Sigmoid colon (tissue), 7 donors: ENCODE measurements at regions of chrX and their contacts with region 1.

Region 1: GRCh38 chrX:38327007-38327774 is at the start of gene RPGR:
- DNase-seq: peak; percentile 97
- H3K4me3 ChIP-seq: peak within 1 kb of the TSS; percentile 48 to 68 (median 64)
- H3K27ac ChIP-seq: peak within 1 kb of the TSS; percentile 83 to 92 (median 86)
- H3K4me1 ChIP-seq: peaks cover 0 to 10% (median 0%) of the 10 kb centered on the region in 4 donors
- H3K27me3 ChIP-seq: peaks cover 0 to 3% (median 0%) of the 10 kb centered on the region in 3 donors
- CTCF ChIP-seq: peak; percentile 64 to 72 (median 67)
- EP300 ChIP-seq: no peak
- POLR2A ChIP-seq: no peak
- total RNA-seq, gene RPGR: 9.3 to 41.8 (median 17.6) TPM

Region 2: DNA sequence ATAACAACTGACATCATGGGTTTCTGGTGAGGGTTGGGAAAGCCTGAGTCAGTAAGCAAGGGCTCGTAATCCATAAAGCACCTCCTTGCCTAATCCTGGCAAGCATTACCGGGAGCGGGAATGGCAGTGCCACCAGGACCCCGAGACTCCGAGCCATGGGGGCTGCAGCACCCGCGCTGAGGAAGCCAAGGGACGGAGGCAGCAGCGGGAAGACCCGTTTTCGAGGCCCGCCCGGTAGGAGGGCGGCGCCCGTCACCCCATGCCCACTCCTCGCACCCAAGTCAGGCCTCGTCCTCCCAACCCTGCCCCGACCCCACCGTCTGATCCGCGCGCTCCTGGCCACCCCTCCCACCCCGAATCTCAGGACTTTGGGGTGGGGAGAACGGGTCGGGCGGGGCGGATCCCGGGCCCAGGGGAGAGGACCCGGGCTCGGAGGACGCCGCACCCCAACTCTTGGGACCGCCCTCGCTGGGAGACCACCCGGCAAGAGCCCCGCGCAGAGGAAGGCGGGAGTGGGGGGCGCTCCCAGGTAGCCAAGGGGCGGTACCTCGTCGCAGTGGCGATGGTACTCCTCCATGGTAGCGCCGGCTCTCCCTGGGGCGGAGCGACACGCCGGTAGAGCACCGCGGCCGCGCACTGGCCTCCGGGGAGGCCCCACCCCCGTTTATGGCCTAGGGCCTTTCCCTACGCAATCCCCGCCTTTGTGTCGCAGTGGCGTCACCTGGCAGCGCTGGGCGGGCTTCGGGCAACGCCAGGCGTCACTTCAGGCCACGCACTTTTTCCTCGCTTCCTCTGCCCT is 480.1 kb before region 1 on chrX and contains the start of gene DYNLT3:
- intact Hi-C with region 1: loop called (anchors 2 kb)
- DNase-seq: peak; percentile 90
- H3K4me3 ChIP-seq: peak within 1 kb of the TSS; percentile 74 to 81 (median 78)
- H3K27ac ChIP-seq: peak within 1 kb of the TSS; percentile 87 to 94 (median 88)
- H3K4me1 ChIP-seq: no peaks in the 10 kb centered on the region
- H3K27me3 ChIP-seq: no peaks in the 10 kb centered on the region
- CTCF ChIP-seq: no peak
- EP300 ChIP-seq: no peak
- POLR2A ChIP-seq: peak; percentile 65 to 70
- total RNA-seq, gene DYNLT3: 32.4 to 55.3 (median 45.2) TPM

Region 3: DNA sequence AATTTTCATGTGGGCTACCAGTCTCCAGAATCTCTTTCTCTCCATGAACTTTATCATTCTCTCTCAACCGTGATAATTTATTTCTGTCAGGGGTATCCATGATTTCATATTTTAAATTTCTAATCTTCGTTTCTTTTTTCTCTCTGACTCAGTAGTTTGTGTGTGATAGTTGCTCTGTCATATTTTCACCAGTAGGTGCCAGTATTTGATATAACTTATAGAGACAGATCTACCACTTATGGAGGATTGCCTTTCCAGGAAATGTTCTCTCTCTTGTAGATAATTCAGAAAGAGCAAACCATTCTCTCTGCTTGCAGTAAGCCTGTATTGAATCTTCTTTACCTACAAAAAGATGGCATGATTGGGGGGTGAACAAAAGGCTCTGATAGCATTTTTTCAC is 400.5 kb before region 1 on chrX:
- intact Hi-C with region 1: loop called (anchors 2 kb)
- DNase-seq: no peak
- H3K4me3 ChIP-seq: no peak overlapping the region
- H3K27ac ChIP-seq: no peak overlapping the region
- H3K4me1 ChIP-seq: no peaks in the 10 kb centered on the region
- H3K27me3 ChIP-seq: no peaks in the 10 kb centered on the region
- CTCF ChIP-seq: peak in 2 of 4 experiments; percentile 33 to 37
- EP300 ChIP-seq: no peak
- POLR2A ChIP-seq: no peak

Region 4: DNA sequence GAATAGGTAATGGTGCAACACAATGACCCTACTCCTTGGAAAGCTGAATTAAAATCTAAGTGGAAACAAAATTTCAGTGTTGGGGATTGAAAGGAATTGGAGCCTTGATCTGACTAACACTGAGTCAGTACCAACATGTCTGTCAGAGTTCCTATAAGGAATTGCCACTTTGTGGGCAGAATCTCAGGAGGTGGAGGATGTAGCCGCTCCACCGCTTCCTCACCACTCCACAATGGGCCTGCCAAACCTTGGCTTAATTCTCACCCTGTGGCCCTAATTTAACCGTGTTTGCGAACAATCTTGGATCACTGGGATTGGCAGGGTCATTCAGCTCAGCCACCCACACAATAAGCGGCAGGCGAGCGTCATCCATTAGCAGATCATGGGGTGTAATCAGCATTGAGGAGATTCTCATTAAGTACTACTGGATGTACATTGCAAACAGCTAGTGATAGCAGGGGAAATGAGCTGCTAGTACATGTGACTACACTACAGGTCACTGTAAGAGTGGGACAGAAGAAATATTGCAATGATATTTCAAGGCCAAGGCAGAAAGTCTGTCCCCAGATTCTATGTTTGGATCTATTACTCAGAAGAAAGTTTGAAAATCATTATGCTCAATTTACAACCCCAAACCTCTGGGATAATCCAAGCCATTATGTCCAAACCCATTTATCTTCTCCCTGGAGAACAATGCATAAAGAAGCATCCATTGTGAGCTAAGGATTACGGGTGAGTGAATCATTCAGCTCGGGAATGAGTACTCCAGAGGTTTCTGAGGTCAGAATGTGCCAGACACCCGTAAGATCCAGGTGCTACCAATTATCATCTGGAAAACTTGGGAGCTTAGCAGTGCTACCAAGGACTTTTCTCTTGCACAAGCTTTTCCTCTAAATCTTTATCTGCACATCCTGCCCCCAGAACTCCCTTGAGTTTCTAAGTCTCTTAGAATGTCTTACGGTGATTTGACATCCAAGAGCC is 112.3 kb before region 1 on chrX:
- intact Hi-C with region 1: loop called (anchors 10 kb)
- DNase-seq: no peak
- H3K4me3 ChIP-seq: no peak overlapping the region
- H3K27ac ChIP-seq: no peak overlapping the region
- H3K4me1 ChIP-seq: peaks cover 0 to 25% (median 0%) of the 10 kb centered on the region in 4 donors
- H3K27me3 ChIP-seq: no peaks in the 10 kb centered on the region
- CTCF ChIP-seq: no peak
- EP300 ChIP-seq: no peak
- POLR2A ChIP-seq: no peak

Region 5: GRCh38 chrX:38561126-38561868 is 234.1 kb after region 1 on chrX and contains the start of gene TSPAN7:
- intact Hi-C with region 1: loop called (anchors 10 kb)
- DNase-seq: peak; percentile 87
- H3K4me3 ChIP-seq: peak within 1 kb of the TSS; percentile 34 to 53 (median 50)
- H3K27ac ChIP-seq: peak within 1 kb of the TSS; percentile 49 to 68 (median 61)
- H3K4me1 ChIP-seq: peaks cover 0 to 5% (median 0%) of the 10 kb centered on the region in 4 donors
- H3K27me3 ChIP-seq: no peaks in the 10 kb centered on the region
- CTCF ChIP-seq: no peak
- EP300 ChIP-seq: no peak
- POLR2A ChIP-seq: no peak
- total RNA-seq, gene TSPAN7: 15.6 to 21.0 (median 17.3) TPM

Region 6: GRCh38 chrX:40108959-40109287 is 1781.7 kb after region 1 on chrX:
- intact Hi-C with region 1: loop called (anchors 5 kb)
- DNase-seq: peak; percentile 93
- H3K4me3 ChIP-seq: peak overlapping the region; percentile 27 to 72 (median 71)
- H3K27ac ChIP-seq: peak overlapping the region; percentile 90 to 98 (median 94)
- H3K4me1 ChIP-seq: peaks cover 0 to 58% (median 27%) of the 10 kb centered on the region in 4 donors
- H3K27me3 ChIP-seq: peaks cover 0 to 21% (median 0%) of the 10 kb centered on the region in 3 donors
- CTCF ChIP-seq: no peak
- EP300 ChIP-seq: no peak
- POLR2A ChIP-seq: no peak